ENCODE measurements at regions of chr10 and their contacts with region 1.

Region 1: GRCh38 chr10:117442944-117443685 is 67.9 kb upstream of the PDZD8 start:
- DNase-seq: peak; percentile 75
- ATAC-seq: peak; percentile 56
- H3K4me3 Mint-ChIP-seq: no peak overlapping the region
- H3K27ac Mint-ChIP-seq: no peak overlapping the region
- H3K4me1 Mint-ChIP-seq: no peaks in the 10 kb centered on the region
- H3K27me3 Mint-ChIP-seq: peaks cover 25% of the 10 kb centered on the region
- CTCF ChIP-seq: peak; percentile 92

Region 2: GRCh38 chr10:117425974-117426566 is 17.0 kb before region 1 on chr10:
- CTCF ChIA-PET with region 1: interaction called, 22 read pairs
- POLR2A ChIA-PET with region 1: no interaction called
- intact Hi-C with region 1: no loop called
- DNase-seq: no peak
- ATAC-seq: no peak
- H3K4me3 Mint-ChIP-seq: no peak overlapping the region
- H3K27ac Mint-ChIP-seq: no peak overlapping the region
- H3K4me1 Mint-ChIP-seq: no peaks in the 10 kb centered on the region
- H3K27me3 Mint-ChIP-seq: peaks cover 3% of the 10 kb centered on the region
- CTCF ChIP-seq: no peak

Region 3: GRCh38 chr10:117431160-117431559 is 12.0 kb before region 1 on chr10:
- CTCF ChIA-PET with region 1: interaction called, 22 read pairs
- POLR2A ChIA-PET with region 1: no interaction called
- intact Hi-C with region 1: no loop called
- DNase-seq: no peak
- ATAC-seq: no peak
- H3K4me3 Mint-ChIP-seq: no peak overlapping the region
- H3K27ac Mint-ChIP-seq: no peak overlapping the region
- H3K4me1 Mint-ChIP-seq: no peaks in the 10 kb centered on the region
- H3K27me3 Mint-ChIP-seq: peaks cover 13% of the 10 kb centered on the region
- CTCF ChIP-seq: no peak

Measured in activated CD8-positive, alpha-beta T cell treated with anti-CD3 and anti-CD28 coated beads for 36 hours (primary cell).